HepG2 (cell line): ENCODE measurements at regions of chr3 and their contacts with region 1.

Region 1: DNA sequence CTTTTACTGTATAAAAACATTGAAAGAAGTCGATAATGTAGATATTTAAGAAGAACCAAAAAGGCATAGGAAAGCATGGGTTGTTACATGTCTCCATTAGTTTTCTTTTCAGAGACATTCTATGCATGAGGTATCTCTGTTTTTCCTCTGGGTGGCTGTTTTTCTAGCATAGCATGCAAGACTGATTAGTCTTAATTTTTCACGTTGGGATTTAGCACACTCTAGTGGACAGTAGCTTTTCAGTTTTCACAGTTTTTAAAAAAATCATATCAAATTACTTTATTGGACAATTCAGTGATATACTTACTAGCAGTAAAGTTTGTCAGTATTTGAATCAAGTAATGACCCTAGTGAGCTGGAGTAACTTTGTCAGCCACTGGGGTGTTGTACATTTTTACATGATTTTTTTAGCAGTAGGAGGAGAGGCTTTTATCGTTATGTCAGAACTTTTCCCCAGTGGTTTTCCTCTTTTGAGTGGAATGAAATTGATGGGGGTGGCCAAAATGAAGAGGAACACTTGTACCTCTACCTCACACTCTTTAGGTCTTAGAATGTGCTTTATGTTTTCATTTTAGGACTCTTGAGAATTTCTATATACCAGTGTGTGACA is 57.2 kb downstream of the SEC22A start:
- DNase-seq: peak; percentile 43
- ATAC-seq: peak; percentile 80
- H3K4me3 ChIP-seq: no peak overlapping the region
- H3K27ac ChIP-seq: no peak overlapping the region
- H3K4me1 ChIP-seq: no peaks in the 10 kb centered on the region
- H3K27me3 ChIP-seq: no peaks in the 10 kb centered on the region; a peak in 1 of 5 replicates
- CTCF ChIP-seq: peak; percentile 48
- EP300 ChIP-seq: no peak
- POLR2A ChIP-seq: no peak
- RAD21 ChIP-seq: no peak

Region 2: DNA sequence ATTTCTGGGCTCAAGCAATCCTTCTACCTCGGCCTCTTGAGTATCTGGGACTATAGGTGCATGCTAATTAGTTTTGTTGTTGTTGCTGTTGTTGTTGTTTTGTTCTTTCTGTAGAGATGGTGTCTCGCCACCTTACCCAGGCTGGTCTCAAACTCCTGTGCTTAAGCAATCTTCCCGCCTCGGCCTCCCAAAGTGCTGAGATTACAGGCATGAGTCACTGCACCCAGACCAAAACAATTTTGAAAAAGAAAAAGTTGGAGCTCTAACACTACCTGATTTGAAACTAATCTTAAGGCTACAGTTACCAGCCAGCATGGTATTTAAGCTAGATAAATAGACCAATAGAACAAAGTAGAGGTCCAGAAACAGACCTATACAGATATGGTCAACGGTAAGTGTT is 773.9 kb before region 1 on chr3:
- CTCF ChIA-PET with region 1: no interaction called
- POLR2A ChIA-PET with region 1: no interaction called
- in situ Hi-C with region 1: no loop called
- intact Hi-C with region 1: no loop called
- DNase-seq: no peak
- ATAC-seq: no peak
- H3K4me3 ChIP-seq: no peak overlapping the region
- H3K27ac ChIP-seq: no peak overlapping the region
- H3K4me1 ChIP-seq: no peaks in the 10 kb centered on the region
- H3K27me3 ChIP-seq: no peaks in the 10 kb centered on the region
- CTCF ChIP-seq: no peak
- EP300 ChIP-seq: no peak
- POLR2A ChIP-seq: no peak
- RAD21 ChIP-seq: no peak

Region 3: GRCh38 chr3:123036352-123037014 is 222.4 kb before region 1 on chr3:
- CTCF ChIA-PET with region 1: no interaction called
- POLR2A ChIA-PET with region 1: no interaction called
- in situ Hi-C with region 1: no loop called
- intact Hi-C with region 1: loop called (anchors 10 kb)
- DNase-seq: peak; percentile 24
- ATAC-seq: peak; percentile 62; the same call in 2 of the 3 replicates
- H3K4me3 ChIP-seq: no peak overlapping the region
- H3K27ac ChIP-seq: no peak overlapping the region
- H3K4me1 ChIP-seq: peaks cover 10% of the 10 kb centered on the region
- H3K27me3 ChIP-seq: peaks cover 0 to 17% of the 10 kb centered on the region in 2 experiments; a peak in 3 of 5 replicates
- CTCF ChIP-seq: peak; percentile 64
- EP300 ChIP-seq: no peak
- POLR2A ChIP-seq: no peak
- RAD21 ChIP-seq: no peak